ENCODE measurements at regions of chr5 and their contacts with region 1.

Region 1: GRCh38 chr5:134041570-134042411 is 37.0 kb upstream of the VDAC1 start:
- DNase-seq: no peak
- H3K4me3 Mint-ChIP-seq: no peak overlapping the region
- H3K27ac Mint-ChIP-seq: no peak overlapping the region
- H3K4me1 Mint-ChIP-seq: peaks cover 11% of the 10 kb centered on the region
- H3K27me3 Mint-ChIP-seq: no peaks in the 10 kb centered on the region
- CTCF ChIP-seq: no peak

Region 2: DNA sequence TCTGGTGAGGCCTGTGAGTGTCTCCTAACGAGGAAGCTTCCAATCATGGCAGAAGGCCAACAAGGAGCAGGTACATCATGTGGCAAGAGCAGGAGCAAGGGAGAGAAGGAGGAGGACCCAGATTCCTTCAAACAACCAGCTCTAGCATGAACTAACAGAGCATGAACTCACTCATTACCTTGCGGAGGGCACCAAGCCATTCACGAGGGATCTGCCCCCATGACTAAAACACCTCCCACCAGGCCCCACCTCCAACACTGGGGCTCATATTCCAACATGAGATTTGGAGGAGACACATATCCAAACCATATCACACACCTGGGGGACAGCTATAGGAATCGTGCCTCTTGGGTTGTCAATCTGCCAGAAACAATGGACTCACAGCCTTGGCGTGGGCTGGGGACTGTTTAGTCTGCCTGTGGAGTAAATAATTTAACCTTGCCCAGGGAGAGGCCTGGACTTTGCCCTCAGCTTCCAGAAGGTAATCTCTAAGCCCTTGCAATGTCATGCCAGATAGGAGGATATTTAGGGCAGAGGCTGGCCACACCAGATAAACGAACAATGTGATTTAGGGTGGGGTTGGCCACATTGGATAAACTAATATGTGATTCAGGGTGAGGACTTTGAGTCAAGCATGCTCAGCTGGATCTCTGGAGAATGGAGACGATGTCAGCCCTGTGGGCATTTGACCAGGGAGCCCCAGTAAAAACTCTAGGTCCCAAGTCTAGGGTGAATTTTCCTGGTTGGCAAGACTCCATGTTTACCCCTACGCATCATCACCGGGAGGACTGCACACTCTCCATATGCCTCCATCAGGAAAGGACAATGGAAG is 23.4 kb before region 1 on chr5:
- CTCF ChIA-PET with region 1: interaction called, 33 read pairs
- POLR2A ChIA-PET with region 1: no interaction called
- intact Hi-C with region 1: no loop called
- DNase-seq: no peak
- H3K4me3 Mint-ChIP-seq: no peak overlapping the region
- H3K27ac Mint-ChIP-seq: no peak overlapping the region
- H3K4me1 Mint-ChIP-seq: no peaks in the 10 kb centered on the region
- H3K27me3 Mint-ChIP-seq: peaks cover 4% of the 10 kb centered on the region
- CTCF ChIP-seq: no peak

Region 3: DNA sequence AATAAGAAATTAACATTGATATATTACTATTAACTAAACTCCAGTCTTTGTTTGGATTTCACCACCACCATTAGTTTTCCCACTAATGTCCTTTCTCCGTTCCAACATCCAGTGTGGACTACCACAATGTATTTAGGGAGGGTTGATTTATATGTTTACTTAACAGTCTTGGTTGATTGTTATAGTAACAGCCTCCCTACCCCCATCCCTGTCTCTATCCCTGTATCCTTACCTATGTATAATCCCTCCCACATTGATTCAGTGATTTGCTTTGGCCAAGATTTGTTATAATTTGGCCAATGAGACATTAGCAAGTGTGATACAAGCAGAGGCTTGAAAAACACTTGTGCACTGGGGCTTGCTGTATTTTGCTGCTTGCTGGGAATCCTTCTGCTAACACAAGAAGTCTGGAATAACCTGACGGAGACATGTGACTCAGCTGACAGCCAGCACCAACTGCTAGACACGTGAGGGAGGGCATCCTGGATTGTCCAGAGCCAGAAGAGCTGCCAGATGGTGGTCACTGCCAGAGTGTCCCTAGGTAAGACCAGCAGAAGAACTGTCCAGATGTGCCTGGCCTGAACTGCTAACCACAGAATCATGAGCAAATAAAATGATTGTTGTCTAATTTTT is 21.5 kb after region 1 on chr5:
- CTCF ChIA-PET with region 1: interaction called, 29 read pairs
- POLR2A ChIA-PET with region 1: interaction called, 5 read pairs
- intact Hi-C with region 1: loop called (anchors 1 kb)
- DNase-seq: peak; percentile 18
- H3K4me3 Mint-ChIP-seq: no peak overlapping the region
- H3K27ac Mint-ChIP-seq: no peak overlapping the region
- H3K4me1 Mint-ChIP-seq: peaks cover 13% of the 10 kb centered on the region
- H3K27me3 Mint-ChIP-seq: no peaks in the 10 kb centered on the region
- CTCF ChIP-seq: no peak

Region 4: DNA sequence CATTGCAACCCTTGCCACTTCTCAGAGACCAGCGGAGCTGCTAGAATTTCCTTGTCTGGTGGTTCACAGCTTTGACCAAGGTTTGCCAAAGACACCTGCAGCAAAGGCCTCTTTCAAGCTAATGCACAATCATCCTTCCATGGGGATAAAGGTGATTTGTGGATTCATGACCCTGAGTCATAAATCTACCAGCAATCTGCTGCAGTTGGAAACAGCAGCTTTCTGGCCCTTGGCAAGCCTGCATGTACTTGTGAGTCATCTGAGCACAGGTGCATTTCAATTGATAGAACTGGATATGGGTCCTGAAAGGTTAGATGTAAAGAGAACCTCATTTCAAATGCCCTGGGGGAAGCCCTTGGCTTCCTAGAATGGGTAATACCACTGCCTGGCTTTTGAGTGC is 51.1 kb after region 1 on chr5:
- CTCF ChIA-PET with region 1: interaction called, 17 read pairs
- POLR2A ChIA-PET with region 1: interaction called, 5 read pairs
- intact Hi-C with region 1: no loop called
- DNase-seq: peak; percentile 93
- H3K4me3 Mint-ChIP-seq: no peak overlapping the region
- H3K27ac Mint-ChIP-seq: no peak overlapping the region
- H3K4me1 Mint-ChIP-seq: peaks cover 15% of the 10 kb centered on the region
- H3K27me3 Mint-ChIP-seq: no peaks in the 10 kb centered on the region
- CTCF ChIP-seq: no peak

Region 5: GRCh38 chr5:134119720-134120119 is 77.9 kb after region 1 on chr5:
- CTCF ChIA-PET with region 1: interaction called, 29 read pairs
- POLR2A ChIA-PET with region 1: interaction called, 3 read pairs
- intact Hi-C with region 1: no loop called
- DNase-seq: no peak
- H3K4me3 Mint-ChIP-seq: no peak overlapping the region
- H3K27ac Mint-ChIP-seq: no peak overlapping the region
- H3K4me1 Mint-ChIP-seq: peaks cover under 1% of the 10 kb centered on the region
- H3K27me3 Mint-ChIP-seq: no peaks in the 10 kb centered on the region
- CTCF ChIP-seq: no peak

Region 6: DNA sequence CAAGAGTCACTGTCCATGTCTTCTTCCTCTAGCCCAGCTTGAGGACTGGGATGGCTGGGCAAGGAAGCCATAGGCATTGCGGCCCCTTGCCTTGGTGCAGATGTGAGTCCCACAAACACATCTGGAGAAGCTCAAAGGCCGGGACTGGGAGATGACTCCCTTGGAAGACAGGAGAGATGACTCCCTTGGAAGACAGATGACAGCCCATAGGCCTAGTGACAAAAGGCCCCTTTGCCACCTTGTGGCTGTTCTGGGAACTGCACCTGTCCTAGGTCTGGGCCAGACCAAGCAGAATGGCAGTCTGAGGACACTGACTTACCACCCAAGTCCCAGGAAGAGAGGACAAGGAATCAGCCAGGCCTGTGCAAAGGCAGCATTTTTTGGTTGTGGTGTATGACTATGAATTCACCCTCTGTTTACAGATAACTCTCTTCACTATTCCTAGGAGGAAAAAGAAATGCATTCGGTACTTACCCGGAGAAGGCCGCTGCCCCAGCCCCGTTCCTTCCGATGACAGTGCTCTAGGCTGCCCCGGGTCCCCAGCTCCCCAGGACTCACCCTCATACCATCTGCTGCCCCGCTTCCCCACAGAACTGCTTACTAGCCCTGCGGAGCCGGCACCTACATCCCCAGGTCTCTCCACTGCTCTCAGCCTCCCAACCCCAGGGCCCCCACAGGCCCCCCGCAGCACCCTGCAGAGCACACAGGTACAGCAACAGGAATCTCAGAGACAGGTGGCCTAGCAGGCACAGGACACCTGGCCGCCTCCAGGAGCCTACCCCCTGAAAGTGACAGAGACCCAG is 104.2 kb after region 1 on chr5:
- CTCF ChIA-PET with region 1: interaction called, 867 read pairs
- POLR2A ChIA-PET with region 1: interaction called, 44 read pairs
- intact Hi-C with region 1: loop called (anchors 1 kb)
- DNase-seq: peak; percentile 88
- H3K4me3 Mint-ChIP-seq: no peak overlapping the region
- H3K27ac Mint-ChIP-seq: no peak overlapping the region
- H3K4me1 Mint-ChIP-seq: peaks cover 13% of the 10 kb centered on the region
- H3K27me3 Mint-ChIP-seq: no peaks in the 10 kb centered on the region
- CTCF ChIP-seq: peak; percentile 98

Region 7: DNA sequence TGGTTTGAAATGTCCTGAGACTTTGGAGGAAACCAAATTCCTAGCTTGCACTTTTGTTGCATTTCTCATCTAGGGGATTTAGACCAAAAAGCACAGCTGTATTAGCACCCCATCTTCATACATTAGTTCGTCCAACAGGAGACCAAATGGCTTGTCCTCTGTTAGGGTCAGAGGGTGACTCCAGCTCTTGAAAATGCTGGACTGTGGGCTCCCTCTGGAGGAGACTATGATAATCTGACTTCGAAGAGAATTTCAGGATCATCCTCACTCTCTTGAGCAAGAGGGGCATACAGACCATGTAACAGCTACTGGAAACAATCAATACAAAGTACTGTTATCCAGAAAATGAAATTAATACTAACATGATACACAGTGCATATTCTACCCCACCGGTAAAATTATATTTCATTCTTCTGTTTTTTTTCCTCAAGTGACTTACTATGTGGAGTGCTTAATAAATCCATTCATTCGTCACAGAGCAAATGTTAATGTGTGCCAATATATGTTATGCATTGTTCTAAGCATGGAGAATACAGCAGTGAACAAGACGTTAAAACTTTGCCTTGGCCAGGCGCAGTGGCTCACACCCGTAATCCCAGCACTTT is 247.8 kb after region 1 on chr5:
- CTCF ChIA-PET with region 1: interaction called, 20 read pairs
- POLR2A ChIA-PET with region 1: no interaction called
- intact Hi-C with region 1: loop called (anchors 1 kb)
- DNase-seq: peak; percentile 89
- H3K4me3 Mint-ChIP-seq: no peak overlapping the region
- H3K27ac Mint-ChIP-seq: no peak overlapping the region
- H3K4me1 Mint-ChIP-seq: no peaks in the 10 kb centered on the region
- H3K27me3 Mint-ChIP-seq: peaks cover 17% of the 10 kb centered on the region
- CTCF ChIP-seq: peak; percentile 95

Measured in MCF 10A (cell line).